AG04449 (cell line): ENCODE measurements at regions of chr1 and their contacts with region 1.

Region 1: DNA sequence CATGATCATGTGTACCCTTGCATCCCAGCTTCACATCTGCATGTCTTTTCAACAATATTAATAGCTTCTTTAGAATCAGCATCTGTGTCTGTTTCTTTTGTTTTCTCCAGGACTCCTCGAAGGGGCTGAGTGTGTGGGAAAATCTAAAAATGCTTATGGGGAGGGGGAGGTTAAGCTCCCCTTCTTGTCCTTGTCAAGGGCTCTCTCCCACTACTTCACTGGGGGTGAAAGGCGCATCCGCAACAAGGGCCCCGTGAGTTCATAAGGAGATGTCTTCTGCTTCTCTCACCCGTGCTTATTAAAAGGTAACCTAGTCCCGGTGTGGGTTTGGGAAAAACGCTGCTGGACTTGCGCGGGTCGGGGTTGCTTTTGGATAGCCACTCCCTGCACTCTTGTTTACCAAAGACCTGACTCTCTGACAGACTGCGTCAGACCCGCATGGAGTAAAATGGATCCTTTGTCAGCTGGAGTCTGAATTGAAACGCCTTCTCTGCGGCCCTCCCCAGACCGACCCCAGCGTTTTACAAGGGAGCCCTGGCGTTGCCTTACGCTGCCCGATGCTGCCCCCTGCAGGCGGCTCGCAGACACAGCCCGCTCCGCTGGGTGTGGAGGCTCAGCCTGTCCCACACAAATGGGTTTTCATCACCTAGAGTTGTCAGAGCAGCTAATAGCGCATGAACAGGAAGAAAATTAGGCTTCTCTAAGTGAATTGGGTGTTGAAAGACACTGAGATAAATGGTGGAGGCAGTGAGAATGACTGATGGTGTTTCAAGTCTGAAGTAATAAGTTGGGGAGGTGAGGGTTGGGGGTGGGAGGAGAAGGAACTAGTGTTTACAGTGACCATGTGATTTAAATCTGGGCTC is 53.8 kb downstream of the IER5 start:
- DNase-seq: peak; percentile 36
- H3K4me3 ChIP-seq: peak overlapping the region; percentile 43
- CTCF ChIP-seq: peak; percentile 98

Region 2: GRCh38 chr1:180881806-180882509 is 260.4 kb before region 1 on chr1:
- CTCF ChIA-PET with region 1: interaction called, 131 read pairs
- POLR2A ChIA-PET with region 1: no interaction called
- DNase-seq: no peak
- H3K4me3 ChIP-seq: no peak overlapping the region
- CTCF ChIP-seq: peak; percentile 39

Region 3: DNA sequence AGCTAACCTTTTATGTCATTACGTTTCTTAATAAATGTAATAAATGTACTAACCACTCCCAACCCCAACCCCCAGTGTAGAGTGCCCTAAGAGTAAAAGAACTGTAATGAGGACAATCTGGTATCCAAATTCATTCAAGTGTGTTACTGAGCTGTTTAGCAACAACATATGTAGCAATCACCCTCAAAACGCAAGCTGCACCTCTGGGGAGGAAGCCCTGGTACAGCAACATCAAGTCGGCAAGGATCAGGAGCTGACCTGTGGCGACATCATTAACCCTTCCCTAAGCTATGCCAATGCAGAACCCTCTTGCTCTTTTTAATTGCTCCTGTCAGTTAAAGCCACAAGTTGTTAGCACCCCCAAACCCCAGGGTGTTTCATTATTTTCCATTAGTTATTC is 166.8 kb before region 1 on chr1:
- CTCF ChIA-PET with region 1: interaction called, 28 read pairs
- POLR2A ChIA-PET with region 1: no interaction called
- DNase-seq: no peak
- H3K4me3 ChIP-seq: no peak overlapping the region
- CTCF ChIP-seq: no peak

Region 4: GRCh38 chr1:181021811-181022434 is 120.4 kb before region 1 on chr1:
- CTCF ChIA-PET with region 1: interaction called, 46 read pairs
- POLR2A ChIA-PET with region 1: interaction called, 4 read pairs
- DNase-seq: no peak
- H3K4me3 ChIP-seq: peak overlapping the region; percentile 83
- CTCF ChIP-seq: no peak

Region 5: DNA sequence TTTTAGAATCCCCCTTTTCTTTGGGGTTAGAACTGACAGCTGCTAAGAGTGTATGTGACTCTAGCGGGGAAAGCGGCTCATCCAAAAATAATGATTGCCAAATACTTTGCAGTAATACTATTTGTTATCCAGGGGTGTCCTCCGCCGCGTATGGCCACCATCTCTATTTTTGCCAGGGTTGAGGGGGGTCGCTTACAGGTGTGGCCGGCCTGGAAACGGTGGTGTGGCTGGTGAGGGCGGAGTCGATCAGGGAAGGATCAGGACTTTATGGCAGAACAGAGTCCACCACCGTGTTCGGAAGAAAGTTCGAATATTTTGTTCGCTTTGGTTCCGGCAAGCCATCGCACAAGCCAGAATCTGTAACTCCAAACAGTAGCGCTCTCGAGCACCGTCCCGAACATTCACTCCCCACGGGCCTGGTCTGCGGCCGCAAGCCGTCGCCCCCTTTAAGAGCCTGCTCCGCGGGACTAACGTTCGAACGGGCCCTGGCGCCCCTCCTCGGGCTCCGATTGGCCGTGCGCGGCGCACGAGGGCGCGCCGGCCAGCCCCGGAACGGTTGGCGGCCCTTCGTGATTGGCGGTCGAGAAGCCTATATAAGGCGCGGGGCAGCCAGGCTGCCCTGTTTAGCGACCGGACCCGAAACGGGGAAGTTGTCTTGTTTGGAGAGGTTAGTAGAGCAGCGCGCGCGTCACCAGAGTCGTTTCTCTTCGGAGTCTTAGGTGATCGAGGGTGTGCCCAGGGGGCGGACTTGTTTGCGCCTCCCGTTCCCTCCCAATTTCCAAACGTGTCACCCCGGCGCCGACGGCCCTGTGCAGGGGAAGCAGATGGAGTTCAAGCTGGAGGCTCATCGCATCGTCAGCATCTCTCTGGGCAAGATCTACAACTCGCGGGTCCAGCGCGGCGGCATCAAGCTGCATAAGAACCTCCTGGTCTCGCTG is 54.0 kb before region 1 on chr1 and contains the start of gene IER5:
- CTCF ChIA-PET with region 1: interaction called, 148 read pairs
- POLR2A ChIA-PET with region 1: interaction called, 26 read pairs
- DNase-seq: peak; percentile 72
- H3K4me3 ChIP-seq: peak within 1 kb of the TSS; percentile 90
- CTCF ChIP-seq: no peak

Region 6: DNA sequence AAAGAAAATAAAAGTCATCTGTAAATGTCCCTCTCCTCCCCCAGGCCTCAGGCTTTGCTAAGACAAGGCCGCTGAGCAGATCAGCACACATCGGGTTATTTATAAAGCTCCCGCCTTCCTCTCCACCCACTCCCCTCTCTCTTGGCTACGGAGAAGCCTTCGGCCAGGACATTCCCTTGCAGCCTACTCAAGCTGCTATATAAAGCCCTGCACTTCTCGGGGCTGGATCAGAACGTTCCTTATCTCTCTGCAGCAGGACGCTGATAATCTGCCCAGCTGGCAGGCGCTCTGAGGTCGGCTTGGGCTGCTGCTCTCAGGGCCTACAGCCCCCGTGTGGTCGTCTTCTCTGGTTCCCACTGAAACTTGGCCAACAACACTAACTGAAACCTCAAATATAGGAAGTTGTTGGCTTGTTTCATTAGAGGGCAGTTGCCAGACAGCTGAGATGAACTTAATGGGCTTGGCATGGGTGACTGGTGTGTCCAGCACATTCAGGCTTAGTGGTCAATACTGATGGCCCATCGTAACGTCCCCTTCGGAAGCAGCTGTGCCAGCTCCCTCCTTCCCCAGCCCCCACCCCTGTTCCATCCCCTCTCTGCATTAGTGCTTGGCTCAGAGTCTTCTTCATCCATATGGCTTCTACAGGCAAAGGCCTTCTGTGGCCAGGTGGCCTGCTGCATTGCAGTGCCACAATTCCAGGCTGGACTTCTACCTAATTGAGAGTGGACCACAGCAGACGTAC is 10.7 kb after region 1 on chr1:
- CTCF ChIA-PET with region 1: interaction called, 109 read pairs
- POLR2A ChIA-PET with region 1: interaction called, 3 read pairs
- DNase-seq: peak; percentile 34
- H3K4me3 ChIP-seq: no peak overlapping the region
- CTCF ChIP-seq: no peak